IMR-90 (cell line): ENCODE measurements at regions of chr10 and their contacts with region 1.

Region 1: GRCh38 chr10:113704637-113705343 is 25.1 kb downstream of the CASP7 start:
- DNase-seq: peak; percentile 60
- ATAC-seq: peak; percentile 49
- H3K4me3 ChIP-seq: no peak overlapping the region
- H3K27ac ChIP-seq: no peak overlapping the region
- H3K4me1 ChIP-seq: peaks cover 9% of the 10 kb centered on the region
- H3K27me3 ChIP-seq: no peaks in the 10 kb centered on the region
- CTCF ChIP-seq: peak; percentile 69
- POLR2A ChIP-seq: no peak
- RAD21 ChIP-seq: peak; percentile 72

Region 2: GRCh38 chr10:113802997-113803396 is 98.2 kb after region 1 on chr10:
- CTCF ChIA-PET with region 1: interaction called, 4 read pairs
- POLR2A ChIA-PET with region 1: no interaction called
- dilution Hi-C with region 1: no loop called
- in situ Hi-C with region 1: no loop called
- intact Hi-C with region 1: loop called (anchors 2 kb)
- DNase-seq: peak; percentile 2
- ATAC-seq: no peak; the same call in 1 of the 2 replicates
- H3K4me3 ChIP-seq: no peak overlapping the region
- H3K27ac ChIP-seq: no peak overlapping the region
- H3K4me1 ChIP-seq: no peaks in the 10 kb centered on the region; the same call in 1 of the 2 replicates
- H3K27me3 ChIP-seq: peaks cover 16% of the 10 kb centered on the region
- CTCF ChIP-seq: no peak
- POLR2A ChIP-seq: no peak
- RAD21 ChIP-seq: no peak

Region 3: DNA sequence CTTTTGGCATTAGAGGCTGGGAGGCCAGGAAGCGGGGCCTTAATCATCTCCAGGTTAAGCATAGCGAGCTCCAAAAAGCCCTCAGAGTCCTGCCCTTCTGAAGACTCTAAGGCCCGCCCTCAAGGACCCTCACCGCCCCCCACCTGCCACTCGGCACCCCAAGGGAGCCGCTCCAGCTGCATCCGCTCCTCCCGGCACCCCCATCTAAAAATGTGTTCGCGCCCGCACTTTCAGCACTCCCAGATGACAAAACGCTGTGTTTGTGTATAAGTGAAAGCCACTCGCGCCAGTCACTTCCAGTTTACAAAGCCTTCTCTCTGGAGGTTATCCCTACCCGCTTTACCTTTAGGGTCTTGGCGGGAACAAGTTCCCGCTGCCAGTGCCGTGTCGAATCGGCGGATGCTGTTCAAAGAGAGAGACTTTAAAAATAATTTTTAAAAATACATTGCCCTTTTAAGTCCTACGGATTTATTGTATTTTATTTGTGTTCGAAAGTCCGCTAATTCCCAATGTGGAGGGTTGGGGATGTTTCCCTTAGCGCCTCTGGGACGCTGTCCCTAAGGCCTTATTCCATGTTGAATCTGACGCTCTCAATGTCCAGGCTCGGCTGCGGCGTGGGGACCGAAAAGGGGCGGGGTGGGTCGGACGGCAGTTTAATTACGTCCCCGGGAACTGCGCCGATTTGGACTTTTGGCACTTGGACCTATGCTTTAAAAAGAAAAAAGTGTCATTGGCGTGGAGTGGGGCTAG is 149.4 kb after region 1 on chr10 and contains the starts of genes DCLRE1A and NHLRC2:
- CTCF ChIA-PET with region 1: no interaction called
- POLR2A ChIA-PET with region 1: no interaction called
- dilution Hi-C with region 1: no loop called
- in situ Hi-C with region 1: no loop called
- intact Hi-C with region 1: loop called (anchors 2 kb)
- DNase-seq: peak; percentile 75
- ATAC-seq: peak; percentile 87
- H3K4me3 ChIP-seq: peak within 1 kb of the TSS; percentile 92
- H3K27ac ChIP-seq: peak within 1 kb of the TSS; percentile 91
- H3K4me1 ChIP-seq: peaks cover 2% of the 10 kb centered on the region; the same call in 1 of the 2 replicates
- H3K27me3 ChIP-seq: no peaks in the 10 kb centered on the region
- CTCF ChIP-seq: no peak
- POLR2A ChIP-seq: no peak
- RAD21 ChIP-seq: no peak
- total RNA-seq, gene DCLRE1A: 6.3 and 7.8 TPM in 2 replicates
- total RNA-seq, gene NHLRC2: 11.8 and 15.3 TPM in 2 replicates

Region 4: DNA sequence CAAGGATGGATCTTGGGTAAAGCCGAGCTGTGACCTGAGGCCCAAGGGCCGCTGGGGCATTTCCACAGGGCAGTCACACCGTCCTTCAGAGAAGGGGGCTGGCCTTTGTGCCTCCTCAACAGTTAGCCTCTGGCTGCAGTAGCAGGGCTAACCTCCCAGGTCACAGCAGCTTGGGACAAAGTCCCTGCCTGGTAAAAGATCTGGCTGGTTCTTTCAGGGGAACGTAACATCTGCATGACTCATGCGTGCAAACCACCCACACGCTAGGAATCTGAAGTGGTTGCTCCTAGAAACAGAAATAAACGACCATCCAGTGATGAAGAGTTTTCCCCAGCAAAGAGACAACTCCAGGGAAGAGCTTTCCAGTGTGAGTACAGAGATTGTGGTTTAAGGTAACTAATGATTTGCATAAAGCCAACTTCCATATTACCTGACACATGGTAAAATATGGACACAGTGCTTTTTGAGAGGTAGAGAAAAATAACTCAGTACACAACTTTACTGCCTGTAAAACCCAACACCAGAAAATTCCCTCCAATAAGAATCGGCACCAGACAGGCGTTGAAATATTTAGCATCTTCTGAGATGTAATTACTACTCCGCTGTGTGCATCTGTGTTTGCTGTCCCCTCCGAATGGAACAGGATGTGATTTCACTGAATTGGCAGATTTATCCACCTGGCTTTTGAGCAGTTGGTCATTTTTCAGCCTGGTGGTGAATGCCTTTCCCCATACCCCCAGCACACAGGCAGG is 254.0 kb after region 1 on chr10:
- CTCF ChIA-PET with region 1: no interaction called
- POLR2A ChIA-PET with region 1: no interaction called
- dilution Hi-C with region 1: no loop called
- in situ Hi-C with region 1: no loop called
- intact Hi-C with region 1: loop called (anchors 10 kb)
- DNase-seq: peak; percentile 93
- ATAC-seq: peak; percentile 95
- H3K4me3 ChIP-seq: no peak overlapping the region
- H3K27ac ChIP-seq: peak overlapping the region; percentile 35; the same call in 1 of the 2 replicates
- H3K4me1 ChIP-seq: peaks cover 15% of the 10 kb centered on the region
- H3K27me3 ChIP-seq: peaks cover 2% of the 10 kb centered on the region; the same call in 1 of the 2 replicates
- CTCF ChIP-seq: no peak
- POLR2A ChIP-seq: no peak
- RAD21 ChIP-seq: no peak

Region 5: GRCh38 chr10:114103284-114103683 is 398.5 kb after region 1 on chr10:
- CTCF ChIA-PET with region 1: interaction called, 3 read pairs
- POLR2A ChIA-PET with region 1: no interaction called
- dilution Hi-C with region 1: no loop called
- in situ Hi-C with region 1: loop called (anchors 5 kb)
- intact Hi-C with region 1: loop called (anchors 1 kb)
- DNase-seq: peak; percentile 67
- ATAC-seq: peak; percentile 85
- H3K4me3 ChIP-seq: no peak overlapping the region
- H3K27ac ChIP-seq: no peak overlapping the region
- H3K4me1 ChIP-seq: no peaks in the 10 kb centered on the region
- H3K27me3 ChIP-seq: peaks cover 29% of the 10 kb centered on the region
- CTCF ChIP-seq: peak; percentile 74
- POLR2A ChIP-seq: no peak
- RAD21 ChIP-seq: peak; percentile 83

Region 6: DNA sequence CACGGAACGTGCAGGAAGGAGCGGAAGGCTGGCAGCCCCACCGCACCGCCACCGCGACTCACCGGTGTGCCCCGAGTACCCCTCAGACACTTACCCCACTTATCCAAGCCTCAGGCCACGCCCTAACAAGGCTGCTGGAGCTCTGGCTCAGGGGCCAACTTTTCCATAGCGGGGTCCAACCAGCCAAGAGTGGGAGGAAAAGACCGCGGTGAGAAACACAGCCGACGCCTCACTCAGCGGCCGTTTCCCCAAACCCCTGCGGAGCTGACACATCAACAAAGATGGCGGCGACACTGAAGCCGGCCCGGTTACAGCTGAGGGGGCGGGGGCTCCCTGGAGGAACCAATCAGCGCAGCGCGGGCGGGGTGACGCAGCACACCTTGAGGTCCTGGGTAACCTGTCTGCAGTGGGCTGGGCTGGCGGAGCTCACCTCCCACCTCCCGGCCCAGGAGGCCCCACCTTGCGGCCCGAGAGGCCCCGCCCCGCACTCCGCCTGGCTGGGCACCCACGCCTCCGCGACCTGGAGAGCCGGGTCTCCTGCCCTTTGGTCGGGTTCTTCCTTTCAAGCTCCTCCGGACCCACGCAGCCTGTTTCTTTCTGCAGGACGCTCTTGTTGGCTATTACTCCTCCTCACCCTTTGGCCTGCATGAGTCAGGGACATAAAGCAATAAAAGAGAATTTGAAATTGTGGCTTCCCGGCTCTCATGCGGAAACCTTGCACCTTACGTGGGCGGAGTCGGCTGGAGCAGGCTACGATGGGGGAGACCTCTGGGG is 469.3 kb after region 1 on chr10 and contains the start of gene CCDC186:
- CTCF ChIA-PET with region 1: no interaction called
- POLR2A ChIA-PET with region 1: no interaction called
- dilution Hi-C with region 1: no loop called
- in situ Hi-C with region 1: no loop called
- intact Hi-C with region 1: loop called (anchors 5 kb)
- DNase-seq: peak; percentile 80
- ATAC-seq: peak; percentile 99
- H3K4me3 ChIP-seq: peak within 1 kb of the TSS; percentile 90
- H3K27ac ChIP-seq: peak within 1 kb of the TSS; percentile 92
- H3K4me1 ChIP-seq: no peaks in the 10 kb centered on the region
- H3K27me3 ChIP-seq: peaks cover 2% of the 10 kb centered on the region
- CTCF ChIP-seq: no peak
- POLR2A ChIP-seq: peak; percentile 77
- RAD21 ChIP-seq: no peak
- total RNA-seq, gene CCDC186: 6.1 and 15.8 TPM in 2 replicates

Region 7: GRCh38 chr10:115129752-115130151 is 1425.0 kb after region 1 on chr10:
- CTCF ChIA-PET with region 1: no interaction called
- POLR2A ChIA-PET with region 1: no interaction called
- dilution Hi-C with region 1: no loop called
- in situ Hi-C with region 1: no loop called
- intact Hi-C with region 1: loop called (anchors 10 kb)
- DNase-seq: peak; percentile 37
- ATAC-seq: peak; percentile 46
- H3K4me3 ChIP-seq: no peak overlapping the region
- H3K27ac ChIP-seq: no peak overlapping the region
- H3K4me1 ChIP-seq: no peaks in the 10 kb centered on the region
- H3K27me3 ChIP-seq: no peaks in the 10 kb centered on the region
- CTCF ChIP-seq: peak; percentile 56
- POLR2A ChIP-seq: no peak
- RAD21 ChIP-seq: peak; percentile 67